ENCODE measurements at regions of chr19 and their contacts with region 1.

Region 1: GRCh38 chr19:1663852-1664251 is 11.4 kb upstream of the TCF3 start:
- DNase-seq: no peak
- ATAC-seq: no peak
- H3K4me3 Mint-ChIP-seq: no peak overlapping the region
- H3K27ac Mint-ChIP-seq: no peak overlapping the region
- H3K4me1 Mint-ChIP-seq: peaks cover 10% of the 10 kb centered on the region
- H3K27me3 Mint-ChIP-seq: peaks cover 14% of the 10 kb centered on the region

Region 2: DNA sequence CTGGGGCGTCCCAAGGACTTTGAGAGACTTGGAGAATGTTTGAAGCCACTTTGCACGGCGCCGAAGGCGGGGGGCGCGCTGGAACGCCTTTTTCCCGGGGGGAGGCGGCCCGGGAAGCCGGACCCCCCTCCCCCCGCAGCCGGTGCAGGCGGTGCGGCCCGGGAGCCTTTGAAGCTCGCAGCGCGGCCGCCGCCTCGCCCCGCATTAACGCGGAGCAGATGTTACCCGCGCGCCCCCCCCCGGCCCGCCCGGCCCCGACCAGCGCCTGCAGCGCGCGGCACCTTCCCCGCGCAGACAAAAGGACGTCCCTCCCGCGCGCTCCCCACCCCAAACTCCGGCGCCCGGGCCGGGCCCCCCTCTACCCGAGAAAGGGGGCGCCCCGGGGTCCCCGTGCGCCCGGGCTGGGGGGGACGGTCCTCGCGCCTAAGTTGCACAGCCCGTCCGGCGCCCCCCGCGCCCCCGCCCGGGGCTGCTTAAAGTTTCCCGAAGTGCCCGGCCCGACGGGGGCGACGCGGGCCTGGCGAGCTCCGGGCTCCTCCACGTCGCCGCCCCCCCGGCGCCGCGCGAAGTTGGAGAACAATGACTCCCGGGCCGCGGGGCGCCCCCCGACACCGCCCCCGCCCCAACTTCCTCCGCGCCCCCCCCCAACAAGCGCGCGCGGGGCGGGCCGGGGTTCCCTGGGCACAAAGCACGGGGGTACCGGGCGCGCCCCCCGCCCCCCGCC is 12.1 kb before region 1 on chr19:
- CTCF ChIA-PET with region 1: interaction called, 17 read pairs
- DNase-seq: peak; percentile 58
- ATAC-seq: peak; percentile 5
- H3K4me3 Mint-ChIP-seq: peak overlapping the region; percentile 81
- H3K27ac Mint-ChIP-seq: peak overlapping the region; percentile 88
- H3K4me1 Mint-ChIP-seq: peaks cover 30% of the 10 kb centered on the region
- H3K27me3 Mint-ChIP-seq: no peaks in the 10 kb centered on the region

Region 3: DNA sequence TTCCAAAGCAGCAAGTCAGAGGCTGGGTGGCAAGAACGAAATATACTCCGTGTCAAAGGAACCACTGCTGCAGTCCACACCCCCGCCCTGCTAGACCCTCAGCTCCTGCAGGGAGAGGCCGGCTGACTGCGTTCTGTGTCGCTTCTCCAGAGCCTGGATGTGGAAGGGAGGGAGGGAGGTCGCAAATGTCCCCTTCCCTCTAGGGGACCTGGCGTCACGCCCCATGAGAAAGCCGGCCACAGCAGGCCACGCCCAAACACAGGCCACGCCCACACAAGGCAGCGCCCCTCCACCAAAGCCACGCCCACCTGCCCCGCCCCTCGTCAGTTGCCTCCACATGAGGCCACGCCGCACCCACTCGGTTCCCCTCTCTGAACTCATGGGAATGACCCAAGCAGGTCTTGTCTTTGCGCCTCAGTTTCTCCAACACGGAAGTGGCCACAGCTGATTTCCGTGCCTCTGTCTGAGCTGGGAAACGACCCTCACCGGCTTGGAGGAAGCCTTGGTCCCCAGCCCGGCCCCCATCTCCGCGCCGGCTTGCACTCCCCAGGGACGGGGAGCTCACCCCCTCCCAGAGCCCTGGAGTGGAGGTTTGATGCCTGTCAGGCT is 27.0 kb after region 1 on chr19:
- CTCF ChIA-PET with region 1: no interaction called
- DNase-seq: peak; percentile 71
- ATAC-seq: peak; percentile 64
- H3K4me3 Mint-ChIP-seq: no peak overlapping the region
- H3K27ac Mint-ChIP-seq: no peak overlapping the region
- H3K4me1 Mint-ChIP-seq: peaks cover 3% of the 10 kb centered on the region
- H3K27me3 Mint-ChIP-seq: peaks cover 8% of the 10 kb centered on the region

Measured in activated CD8-positive, alpha-beta memory T cell treated with anti-CD3 and anti-CD28 coated beads, Interleukin-2, amount 10 ng/mL, durations not matched to agents 7 days and 5 days (primary cell).